ENCODE measurements at regions of chr16 and their contacts with region 1.

Region 1: DNA sequence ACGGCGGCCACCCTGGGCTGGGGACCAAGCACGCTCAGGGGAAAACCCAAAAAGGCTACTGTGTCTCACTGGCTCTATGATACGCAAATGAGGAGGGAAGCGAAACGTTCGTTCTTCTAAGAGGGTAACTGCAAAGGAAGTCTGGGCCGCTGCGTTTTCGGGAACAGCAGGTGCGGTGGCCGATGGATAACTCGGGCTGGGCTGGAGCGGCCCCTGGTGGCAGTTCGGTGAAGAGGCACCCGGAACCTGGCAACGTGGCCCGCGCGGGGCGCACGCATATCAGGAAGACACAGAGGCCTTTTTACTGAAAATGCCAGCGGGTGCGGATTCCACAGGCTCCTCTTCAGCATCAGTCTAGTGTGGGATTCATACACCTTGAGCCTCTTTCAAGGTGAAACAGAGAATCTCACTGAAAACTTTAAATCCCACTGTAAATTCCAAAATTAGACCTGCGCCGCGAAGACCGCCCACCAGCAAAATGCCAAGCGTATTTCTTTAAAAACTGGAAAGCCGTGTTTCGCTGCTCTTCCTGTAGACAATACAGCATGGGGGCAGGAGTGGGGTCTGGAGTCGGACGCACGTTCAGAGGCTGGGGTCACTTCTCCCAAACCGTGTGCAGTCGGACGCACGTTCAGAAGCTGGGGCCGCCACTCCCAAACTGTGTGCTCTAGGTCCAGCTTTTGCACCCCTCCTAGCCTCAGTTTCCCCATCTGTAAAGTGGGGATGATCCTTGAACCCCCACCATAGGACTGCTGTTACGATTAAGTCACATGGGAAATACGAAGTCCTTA is 44.4 kb upstream of the METTL9 start:
- DNase-seq: peak; percentile 66
- H3K4me3 ChIP-seq: no peak overlapping the region
- H3K27ac ChIP-seq: no peak overlapping the region
- H3K4me1 ChIP-seq: no peaks in the 10 kb centered on the region
- H3K27me3 ChIP-seq: peaks cover 0 to 3% of the 10 kb centered on the region in 2 experiments
- CTCF ChIP-seq: peak; percentile 96 to 100
- POLR2A ChIP-seq: no peak

Region 2: DNA sequence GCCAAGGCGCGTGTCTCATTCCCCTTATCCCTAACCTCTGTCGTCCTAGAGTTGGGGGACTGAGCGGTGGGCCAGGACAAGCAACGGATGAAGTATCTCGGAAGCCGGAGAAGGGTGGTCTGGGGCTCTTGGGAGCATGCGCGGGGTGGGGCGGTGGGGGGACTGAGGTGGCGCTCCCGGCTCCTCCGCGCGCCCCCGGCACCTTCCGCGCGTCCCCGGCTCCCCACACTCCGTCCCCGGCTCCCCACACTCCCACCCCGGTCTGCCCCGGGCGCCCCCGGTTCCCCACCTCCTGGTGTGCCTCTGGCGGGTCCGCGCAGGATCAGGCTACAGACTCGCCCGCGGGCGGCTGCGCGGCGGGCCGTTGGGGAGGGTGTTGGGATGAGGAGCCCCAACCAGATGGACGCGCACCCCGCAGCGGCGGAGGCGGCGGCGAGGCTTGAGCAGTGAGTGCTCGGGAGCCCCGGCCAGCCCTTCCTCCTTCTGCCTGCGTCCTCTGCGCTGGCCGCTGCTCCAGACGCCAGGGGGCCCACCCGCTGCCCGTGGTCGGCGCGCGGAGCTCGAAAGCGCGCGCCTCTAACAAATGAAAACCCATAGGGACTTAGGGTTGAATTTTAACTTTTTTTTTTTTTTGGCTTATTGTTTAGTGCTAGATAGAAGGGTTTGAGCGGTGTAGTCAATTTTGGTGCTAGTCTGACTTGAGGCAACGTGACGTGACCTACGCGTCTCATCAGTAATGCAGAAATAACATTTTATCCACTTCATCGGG is 271.3 kb before region 1 on chr16:
- CTCF ChIA-PET with region 1: no interaction called
- POLR2A ChIA-PET with region 1: no interaction called
- dilution Hi-C with region 1: no loop called
- intact Hi-C with region 1: loop called (anchors 5 kb)
- DNase-seq: peak; percentile 21
- H3K4me3 ChIP-seq: peak overlapping the region in 2 of 3 experiments; percentile 12 to 26
- H3K27ac ChIP-seq: no peak overlapping the region
- H3K4me1 ChIP-seq: no peaks in the 10 kb centered on the region
- H3K27me3 ChIP-seq: peaks cover 25 to 54% of the 10 kb centered on the region in 2 experiments
- CTCF ChIP-seq: peak; percentile 24 to 68
- POLR2A ChIP-seq: no peak

Region 3: GRCh38 chr16:21568502-21569189 is 13.7 kb after region 1 on chr16:
- CTCF ChIA-PET with region 1: interaction called, 5 read pairs
- POLR2A ChIA-PET with region 1: no interaction called
- dilution Hi-C with region 1: no loop called
- intact Hi-C with region 1: loop called (anchors 1 kb)
- DNase-seq: no peak
- H3K4me3 ChIP-seq: no peak overlapping the region
- H3K27ac ChIP-seq: no peak overlapping the region
- H3K4me1 ChIP-seq: no peaks in the 10 kb centered on the region
- H3K27me3 ChIP-seq: peaks cover 6 to 20% of the 10 kb centered on the region in 2 experiments
- CTCF ChIP-seq: no peak
- POLR2A ChIP-seq: no peak

Measured in endothelial cell of umbilical vein (primary cell).